Common myeloid progenitor, CD34-positive (primary cell): ENCODE measurements at regions of chr3 and their contacts with region 1.

Region 1: DNA sequence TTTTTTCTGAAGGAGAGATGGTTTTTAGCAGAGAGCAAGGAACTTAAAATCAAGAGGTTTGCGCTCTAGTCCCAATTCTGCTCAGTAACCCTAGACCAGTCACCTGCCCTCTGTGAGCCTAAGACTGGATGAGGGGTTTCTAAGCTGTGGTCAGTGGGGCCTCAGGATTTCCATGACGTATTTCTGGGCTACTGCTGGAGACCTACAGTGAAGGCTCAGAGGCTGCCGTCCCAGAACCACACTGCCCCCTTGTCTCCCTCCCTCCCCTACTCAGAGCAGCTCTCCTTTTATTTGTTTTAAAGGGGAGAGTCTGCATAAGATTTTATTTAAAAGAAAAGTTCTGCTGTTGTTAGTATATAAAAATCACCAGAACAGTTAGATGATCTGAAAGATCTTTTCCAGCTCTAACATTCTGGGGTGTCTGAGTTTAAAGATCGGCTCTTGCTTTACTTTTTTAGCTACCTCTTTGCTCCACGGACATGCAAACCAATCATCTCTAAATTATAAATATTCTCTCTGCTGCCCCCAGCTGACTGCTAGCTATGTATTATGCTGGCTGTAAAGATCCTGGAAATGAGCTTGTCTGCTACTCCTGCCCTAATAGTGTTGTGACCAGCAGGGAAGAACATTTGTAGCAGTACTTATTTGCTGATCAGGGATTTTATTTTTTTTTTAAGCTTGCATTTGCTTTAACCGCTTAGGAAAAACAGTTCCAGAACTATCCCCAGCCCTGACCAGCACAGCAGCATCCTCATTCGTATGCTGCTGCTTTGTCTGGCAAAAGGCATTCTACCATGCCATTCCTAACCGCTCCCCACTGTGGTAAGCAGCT is 28.6 kb upstream of the NDUFB4 start:
- DNase-seq: peak; percentile 44 to 64 (median 62)
- H3K4me3 ChIP-seq: peak overlapping the region in 4 of 7 experiments; percentile 20 to 63 (median 40)
- H3K27ac ChIP-seq: no peak overlapping the region
- H3K4me1 ChIP-seq: peaks cover 0 to 6% (median 0%) of the 10 kb centered on the region in 4 experiments
- H3K27me3 ChIP-seq: no peaks in the 10 kb centered on the region

Region 2: GRCh38 chr3:120596116-120596852 is 28.7 kb after region 1 on chr3 and contains the start of gene NDUFB4:
- CTCF ChIA-PET with region 1: interaction called, 10 read pairs
- POLR2A ChIA-PET with region 1: no interaction called
- DNase-seq: peak; percentile 98
- H3K4me3 ChIP-seq: peak within 1 kb of the TSS; percentile 42 to 94 (median 89)
- H3K27ac ChIP-seq: peak within 1 kb of the TSS; percentile 94 to 96
- H3K4me1 ChIP-seq: peaks cover 3 to 29% (median 8%) of the 10 kb centered on the region in 4 experiments
- H3K27me3 ChIP-seq: no peaks in the 10 kb centered on the region

Region 3: GRCh38 chr3:120795017-120795648 is 227.5 kb after region 1 on chr3:
- CTCF ChIA-PET with region 1: interaction called, 10 read pairs
- POLR2A ChIA-PET with region 1: no interaction called
- DNase-seq: peak; percentile 78 to 91 (median 85)
- H3K4me3 ChIP-seq: no peak overlapping the region
- H3K27ac ChIP-seq: no peak overlapping the region
- H3K4me1 ChIP-seq: no peaks in the 10 kb centered on the region
- H3K27me3 ChIP-seq: peaks cover 0 to 40% (median 8%) of the 10 kb centered on the region in 5 experiments